ENCODE measurements at regions of chr1 and their contacts with region 1.

Region 1: DNA sequence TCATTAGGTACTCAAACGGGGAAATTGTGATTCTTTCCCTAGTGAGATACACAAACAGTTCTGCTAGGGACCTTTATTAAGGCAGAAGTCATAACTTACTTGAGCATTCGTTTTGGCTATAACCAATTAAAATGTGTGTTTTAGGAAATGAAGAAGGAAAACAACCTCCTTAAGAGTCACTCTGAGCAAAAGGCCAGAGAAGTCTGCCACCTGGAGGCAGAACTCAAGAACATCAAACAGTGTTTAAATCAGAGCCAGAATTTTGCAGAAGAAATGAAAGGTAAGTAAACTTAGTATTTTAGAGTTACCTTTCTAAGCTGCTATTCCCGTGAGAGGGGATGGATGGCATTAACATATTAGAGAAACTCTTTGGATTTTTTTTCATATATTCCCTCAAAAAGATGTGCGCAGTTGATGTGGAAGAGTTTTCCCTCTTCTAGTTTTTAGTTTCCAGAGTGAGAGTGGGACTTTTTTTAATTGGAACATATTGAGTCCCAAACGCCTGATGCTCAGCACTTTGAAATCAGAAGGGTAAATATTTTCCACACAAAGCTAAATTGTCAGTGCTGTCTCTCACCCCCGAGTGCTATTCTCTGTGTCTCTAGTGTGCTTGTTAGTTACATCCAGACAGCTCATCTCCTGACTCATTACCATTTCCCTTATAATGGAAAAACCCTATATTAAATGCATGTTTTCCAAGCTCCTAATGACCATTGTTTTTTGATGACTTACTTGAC is 34.9 kb downstream of the CENPF start:
- DNase-seq: peak; percentile 71
- H3K4me3 Mint-ChIP-seq: no peak overlapping the region
- H3K27ac Mint-ChIP-seq: peak overlapping the region; percentile 22
- H3K4me1 Mint-ChIP-seq: no peaks in the 10 kb centered on the region
- H3K27me3 Mint-ChIP-seq: no peaks in the 10 kb centered on the region
- CTCF ChIP-seq: peak; percentile 87

Region 2: DNA sequence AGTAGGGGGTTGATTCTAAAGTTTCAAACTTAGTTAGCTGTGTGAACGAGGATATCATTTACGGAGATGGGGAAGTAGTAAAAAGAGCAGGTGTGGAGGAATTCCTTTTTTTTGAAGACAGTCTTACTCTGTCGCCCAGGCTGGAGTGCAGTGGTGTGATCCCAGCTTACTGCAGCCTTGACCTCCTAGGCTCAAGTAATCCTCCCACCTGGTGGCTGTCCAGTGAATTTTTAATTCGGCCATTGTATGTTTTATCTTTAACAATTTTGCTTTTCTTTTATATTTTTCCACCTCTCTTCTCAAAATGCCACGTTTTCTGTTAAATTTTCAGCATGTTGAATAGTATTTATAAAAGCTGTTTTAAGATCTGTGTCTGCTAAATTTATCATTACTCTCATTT is 47.2 kb before region 1 on chr1:
- CTCF ChIA-PET with region 1: interaction called, 13 read pairs
- POLR2A ChIA-PET with region 1: no interaction called
- intact Hi-C with region 1: no loop called
- DNase-seq: no peak
- H3K4me3 Mint-ChIP-seq: no peak overlapping the region
- H3K27ac Mint-ChIP-seq: no peak overlapping the region
- H3K4me1 Mint-ChIP-seq: no peaks in the 10 kb centered on the region
- H3K27me3 Mint-ChIP-seq: no peaks in the 10 kb centered on the region
- CTCF ChIP-seq: peak; percentile 33

Region 3: GRCh38 chr1:214623430-214623829 is 14.5 kb before region 1 on chr1:
- CTCF ChIA-PET with region 1: interaction called, 264 read pairs
- POLR2A ChIA-PET with region 1: interaction called, 6 read pairs
- intact Hi-C with region 1: no loop called
- DNase-seq: peak; percentile 42
- H3K4me3 Mint-ChIP-seq: no peak overlapping the region
- H3K27ac Mint-ChIP-seq: peak overlapping the region; percentile 36
- H3K4me1 Mint-ChIP-seq: peaks cover 11% of the 10 kb centered on the region
- H3K27me3 Mint-ChIP-seq: no peaks in the 10 kb centered on the region
- CTCF ChIP-seq: no peak

Region 4: GRCh38 chr1:214660862-214661261 is 23.0 kb after region 1 on chr1:
- CTCF ChIA-PET with region 1: interaction called, 133 read pairs
- POLR2A ChIA-PET with region 1: interaction called, 4 read pairs
- intact Hi-C with region 1: no loop called
- DNase-seq: peak; percentile 42
- H3K4me3 Mint-ChIP-seq: no peak overlapping the region
- H3K27ac Mint-ChIP-seq: no peak overlapping the region
- H3K4me1 Mint-ChIP-seq: peaks cover 13% of the 10 kb centered on the region
- H3K27me3 Mint-ChIP-seq: no peaks in the 10 kb centered on the region
- CTCF ChIP-seq: peak; percentile 82

Region 5: DNA sequence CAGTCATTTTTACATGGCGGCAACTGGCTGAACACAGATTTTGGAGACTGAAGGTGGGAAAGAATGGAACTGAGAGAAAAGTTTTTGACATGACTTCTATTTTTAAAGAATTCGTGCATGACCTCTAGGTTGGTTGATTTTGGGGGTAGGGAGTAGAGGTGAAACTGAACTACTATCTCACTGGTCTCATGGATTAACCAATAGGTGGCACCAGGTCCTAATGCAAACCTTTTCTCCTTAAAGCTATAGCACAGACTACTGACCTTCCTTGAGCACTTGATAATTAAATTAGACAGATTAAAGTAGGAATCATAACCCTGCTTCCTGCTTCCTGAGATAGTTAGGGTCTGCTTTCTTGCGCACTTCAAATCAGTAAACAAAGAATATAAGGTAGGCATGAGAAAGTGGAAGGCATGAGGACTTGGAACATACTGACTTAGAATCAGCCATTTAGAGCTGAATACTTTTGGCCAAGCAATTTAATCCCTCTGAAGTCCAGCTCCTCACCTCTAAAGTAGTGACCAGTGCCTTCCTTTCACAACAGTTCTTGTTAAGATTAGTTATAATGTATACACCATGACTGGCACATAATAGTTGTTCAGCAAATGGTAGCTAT is 171.1 kb after region 1 on chr1:
- CTCF ChIA-PET with region 1: interaction called, 10 read pairs
- POLR2A ChIA-PET with region 1: no interaction called
- intact Hi-C with region 1: no loop called
- DNase-seq: peak; percentile 84
- H3K4me3 Mint-ChIP-seq: no peak overlapping the region
- H3K27ac Mint-ChIP-seq: no peak overlapping the region
- H3K4me1 Mint-ChIP-seq: no peaks in the 10 kb centered on the region
- H3K27me3 Mint-ChIP-seq: no peaks in the 10 kb centered on the region
- CTCF ChIP-seq: peak; percentile 93

Region 6: DNA sequence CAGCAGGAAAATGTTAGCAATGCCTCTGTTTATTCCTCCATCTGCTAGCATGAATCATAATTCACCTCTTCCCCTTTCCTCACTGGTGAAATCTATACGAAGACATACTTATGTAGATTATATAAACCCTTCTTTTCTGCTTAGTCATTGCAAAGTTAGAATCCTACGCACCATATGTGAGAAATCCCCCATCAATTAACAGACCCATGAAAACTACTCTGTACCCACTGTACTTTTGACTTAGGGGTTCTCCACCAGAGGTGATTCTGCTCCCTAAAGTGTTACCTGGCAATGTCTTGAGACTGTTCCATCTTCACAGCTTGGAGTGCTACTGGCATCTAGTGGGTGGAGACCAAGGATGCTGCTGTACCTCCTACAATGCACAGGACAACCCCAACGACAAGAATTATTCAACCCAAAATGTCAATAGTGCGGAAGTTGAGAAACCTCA is 879.6 kb after region 1 on chr1:
- CTCF ChIA-PET with region 1: interaction called, 12 read pairs
- POLR2A ChIA-PET with region 1: interaction called, 3 read pairs
- intact Hi-C with region 1: no loop called
- DNase-seq: peak; percentile 79
- H3K4me3 Mint-ChIP-seq: no peak overlapping the region
- H3K27ac Mint-ChIP-seq: peak overlapping the region; percentile 65
- H3K4me1 Mint-ChIP-seq: peaks cover 12% of the 10 kb centered on the region
- H3K27me3 Mint-ChIP-seq: no peaks in the 10 kb centered on the region
- CTCF ChIP-seq: peak; percentile 87

Region 7: DNA sequence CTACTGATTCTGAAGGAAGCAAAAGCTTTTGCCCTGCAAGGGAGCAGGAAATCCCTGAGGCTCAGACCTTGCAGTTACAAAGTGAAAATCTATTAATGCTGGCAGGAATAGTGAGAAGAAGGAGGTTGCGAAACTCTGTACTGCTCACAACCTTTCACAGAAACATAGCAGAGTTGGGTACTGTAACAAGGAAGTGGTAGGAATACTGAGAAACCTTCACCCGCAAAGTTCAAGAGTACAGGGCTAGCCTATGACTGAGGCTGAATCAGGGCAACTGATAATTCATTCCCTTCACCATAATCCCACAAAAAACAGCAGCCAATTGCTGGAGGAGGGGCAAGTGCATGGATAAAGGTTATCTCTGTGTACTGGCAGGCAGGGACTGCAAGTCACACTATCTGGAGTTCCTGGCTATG is 905.3 kb after region 1 on chr1:
- CTCF ChIA-PET with region 1: interaction called, 10 read pairs
- POLR2A ChIA-PET with region 1: no interaction called
- intact Hi-C with region 1: no loop called
- DNase-seq: peak; percentile 79
- H3K4me3 Mint-ChIP-seq: no peak overlapping the region
- H3K27ac Mint-ChIP-seq: peak overlapping the region; percentile 24
- H3K4me1 Mint-ChIP-seq: peaks cover 35% of the 10 kb centered on the region
- H3K27me3 Mint-ChIP-seq: no peaks in the 10 kb centered on the region
- CTCF ChIP-seq: no peak